ENCODE measurements at regions of chr6 and their contacts with region 1.

Region 1: GRCh38 chr6:28896505-28897368 is 27.0 kb downstream of the TRIM27 start:
- DNase-seq: peak; percentile 60 to 79
- H3K4me3 ChIP-seq: peak overlapping the region; percentile 59 to 81
- H3K27ac ChIP-seq: peak overlapping the region; percentile 93 to 99
- H3K4me1 ChIP-seq: peaks cover 0 to 15% (median 5%) of the 10 kb centered on the region in 4 donors
- H3K27me3 ChIP-seq: no peaks in the 10 kb centered on the region
- CTCF ChIP-seq: peak; percentile 18 to 29

Region 2: GRCh38 chr6:28923318-28924102 is 26.8 kb after region 1 on chr6 and contains the start of gene TRIM27:
- intact Hi-C with region 1: loop called (anchors 1 kb)
- DNase-seq: peak; percentile 86 to 95
- H3K4me3 ChIP-seq: peak within 1 kb of the TSS; percentile 74 to 95
- H3K27ac ChIP-seq: peak within 1 kb of the TSS; percentile 95 to 96
- H3K4me1 ChIP-seq: peaks cover 0 to 31% (median 20%) of the 10 kb centered on the region in 4 donors
- H3K27me3 ChIP-seq: no peaks in the 10 kb centered on the region
- CTCF ChIP-seq: no peak